Activated naive CD4-positive, alpha-beta T cell treated with anti-CD3 and anti-CD28 coated beads for 36 hours (primary cell): ENCODE measurements at regions of chr1 and their contacts with region 1.

Region 1: GRCh38 chr1:92804721-92805169 is 19.8 kb upstream of the EVI5 start:
- DNase-seq: peak; percentile 12
- H3K4me3 Mint-ChIP-seq: no peak overlapping the region
- H3K27ac Mint-ChIP-seq: no peak overlapping the region
- H3K4me1 Mint-ChIP-seq: peaks cover 2% of the 10 kb centered on the region
- H3K27me3 Mint-ChIP-seq: no peaks in the 10 kb centered on the region

Region 2: DNA sequence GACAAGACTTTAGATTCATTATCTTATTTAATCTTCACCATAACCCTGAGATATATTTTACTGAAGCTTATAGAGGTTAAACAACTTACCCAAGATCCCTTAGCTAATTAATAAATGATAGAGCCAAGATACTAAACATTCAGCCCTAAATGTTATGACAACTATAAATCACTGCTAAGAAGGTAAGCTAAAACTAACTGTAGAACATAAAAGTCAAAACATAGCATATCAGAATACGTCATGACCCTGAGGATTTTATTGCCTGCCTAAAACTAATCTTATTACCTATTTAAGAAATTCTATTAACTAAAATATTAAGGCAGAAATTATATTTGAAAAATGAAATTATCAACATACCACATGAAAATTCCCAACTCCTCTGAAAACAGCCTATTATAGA is 42.4 kb before region 1 on chr1:
- CTCF ChIA-PET with region 1: no interaction called
- intact Hi-C with region 1: loop called (anchors 1 kb)
- DNase-seq: no peak
- H3K4me3 Mint-ChIP-seq: no peak overlapping the region
- H3K27ac Mint-ChIP-seq: no peak overlapping the region
- H3K4me1 Mint-ChIP-seq: no peaks in the 10 kb centered on the region
- H3K27me3 Mint-ChIP-seq: no peaks in the 10 kb centered on the region

Region 3: GRCh38 chr1:93015590-93015989 is 210.8 kb after region 1 on chr1:
- CTCF ChIA-PET with region 1: no interaction called
- intact Hi-C with region 1: no loop called
- DNase-seq: no peak
- H3K4me3 Mint-ChIP-seq: no peak overlapping the region
- H3K27ac Mint-ChIP-seq: no peak overlapping the region
- H3K4me1 Mint-ChIP-seq: peaks cover 2% of the 10 kb centered on the region
- H3K27me3 Mint-ChIP-seq: peaks cover 6% of the 10 kb centered on the region